Head of caudate nucleus (tissue), 42 donors: ENCODE measurements at regions of chr14 and their contacts with region 1.

Region 1: GRCh38 chr14:102694530-102695166 is 82.6 kb upstream of the TRAF3 start:
- DNase-seq: peak in 36 of 42 donors; percentile 4 to 89 (median 58)

Region 2: GRCh38 chr14:102708494-102708893 is 13.8 kb after region 1 on chr14:
- intact Hi-C with region 1: no loop called
- DNase-seq: no peak

Region 3: GRCh38 chr14:102917469-102918211 is 223.0 kb after region 1 on chr14:
- intact Hi-C with region 1: loop called (anchors 10 kb)
- DNase-seq: peak; percentile 34 to 84 (median 64)

Region 4: GRCh38 chr14:103292426-103293374 is 598.1 kb after region 1 on chr14:
- intact Hi-C with region 1: loop called (anchors 10 kb)
- DNase-seq: peak; percentile 44 to 93 (median 84)